Endothelial cell of umbilical vein (primary cell): ENCODE measurements at regions of chr4 and their contacts with region 1.

Region 1: GRCh38 chr4:148944136-148944838 is 502.1 kb upstream of the NR3C2 start:
- DNase-seq: no peak
- H3K4me3 ChIP-seq: no peak overlapping the region
- H3K27ac ChIP-seq: no peak overlapping the region
- H3K4me1 ChIP-seq: no peaks in the 10 kb centered on the region
- H3K27me3 ChIP-seq: no peaks in the 10 kb centered on the region
- CTCF ChIP-seq: no peak
- POLR2A ChIP-seq: no peak

Region 2: DNA sequence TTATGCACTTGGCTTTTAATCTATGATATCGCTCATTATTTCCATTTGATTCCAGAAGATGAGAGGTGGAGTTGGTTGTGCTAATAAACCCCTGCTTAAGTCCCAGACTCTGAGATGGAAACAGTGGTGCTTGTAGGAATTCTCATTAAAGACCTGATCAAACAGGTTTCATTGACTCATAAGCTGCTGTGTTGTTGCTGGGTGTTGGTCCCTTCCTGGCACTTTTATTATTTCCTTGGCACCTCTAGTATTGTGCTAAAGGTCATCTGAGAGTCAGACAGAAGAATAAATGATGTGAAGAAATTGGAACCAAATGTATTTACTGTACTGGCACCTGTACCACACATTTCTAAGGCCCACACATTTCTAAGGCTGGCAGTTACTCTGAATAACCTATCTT is 42.7 kb after region 1 on chr4:
- CTCF ChIA-PET with region 1: no interaction called
- POLR2A ChIA-PET with region 1: no interaction called
- dilution Hi-C with region 1: no loop called
- intact Hi-C with region 1: loop called (anchors 1 kb)
- DNase-seq: peak; percentile 3
- H3K4me3 ChIP-seq: no peak overlapping the region
- H3K27ac ChIP-seq: no peak overlapping the region
- H3K4me1 ChIP-seq: no peaks in the 10 kb centered on the region
- H3K27me3 ChIP-seq: no peaks in the 10 kb centered on the region
- CTCF ChIP-seq: no peak
- POLR2A ChIP-seq: no peak